Tibial artery (tissue), 4 donors: ENCODE measurements at regions of chr17 and their contacts with region 1.

Region 1: GRCh38 chr17:75632863-75633485 is at the start of gene SMIM5:
- DNase-seq: peak; percentile 93 to 94
- H3K4me3 ChIP-seq: peak within 1 kb of the TSS in 1 of 2 donors; percentile 17
- H3K27ac ChIP-seq: peak within 1 kb of the TSS; percentile 72 to 76
- H3K4me1 ChIP-seq: peaks cover 10 to 27% (median 20%) of the 10 kb centered on the region in 4 donors
- H3K27me3 ChIP-seq: no peaks in the 10 kb centered on the region
- CTCF ChIP-seq: peak; percentile 93 to 97

Region 2: GRCh38 chr17:75667021-75667790 is 34.2 kb after region 1 on chr17 and contains the starts of genes RECQL5 and SAP30BP:
- intact Hi-C with region 1: loop called (anchors 5 kb)
- DNase-seq: peak; percentile 98
- H3K4me3 ChIP-seq: peak within 1 kb of the TSS; percentile 88 to 96
- H3K27ac ChIP-seq: peak within 1 kb of the TSS; percentile 90 to 91
- H3K4me1 ChIP-seq: peaks cover 0 to 38% (median 19%) of the 10 kb centered on the region in 4 donors
- H3K27me3 ChIP-seq: no peaks in the 10 kb centered on the region
- CTCF ChIP-seq: peak in 1 of 2 experiments; percentile 7

Region 3: DNA sequence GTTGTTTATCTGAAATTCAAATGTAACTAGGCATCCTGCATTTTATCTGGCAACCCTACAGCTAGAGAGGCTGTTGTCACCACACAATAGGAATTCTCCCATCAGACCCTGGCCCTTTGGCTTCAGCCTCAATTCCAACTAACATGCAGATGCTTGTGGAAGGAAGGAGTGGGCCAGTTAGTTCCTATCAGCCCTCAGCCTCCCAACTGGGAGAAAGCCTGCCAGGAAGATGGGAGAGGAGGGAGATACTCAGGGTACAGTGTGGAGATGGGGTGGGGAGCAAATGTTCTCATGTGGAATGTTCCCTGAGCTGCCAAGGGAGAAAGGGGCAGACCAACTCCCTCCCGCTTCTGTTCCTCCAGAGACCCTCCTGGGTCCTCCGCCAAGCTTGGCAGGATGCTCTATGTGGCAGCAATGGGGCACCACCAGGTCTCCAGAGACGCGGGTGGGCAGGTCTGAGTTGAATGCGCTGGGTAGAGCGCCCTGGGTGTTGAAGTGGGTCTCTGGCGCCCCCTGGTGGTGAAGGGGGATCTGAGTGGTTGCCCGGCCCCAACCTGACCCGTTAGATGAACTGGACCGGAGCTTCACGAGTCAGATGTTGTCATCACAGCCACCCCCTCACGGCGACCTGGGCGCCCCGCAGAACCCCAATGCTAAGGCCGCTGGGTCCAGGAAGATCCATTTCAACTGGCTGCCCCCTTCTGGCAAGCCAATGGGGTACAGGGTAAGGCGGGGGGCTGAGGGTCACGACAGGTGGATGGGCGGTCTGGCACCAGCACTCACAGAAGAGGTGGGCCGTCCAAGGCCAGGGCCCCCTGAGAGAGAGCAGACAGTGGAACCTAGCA is 116.8 kb after region 1 on chr17:
- intact Hi-C with region 1: loop called (anchors 2 kb)
- DNase-seq: peak; percentile 87 to 91
- H3K4me3 ChIP-seq: peak overlapping the region in 1 of 2 donors; percentile 27
- H3K27ac ChIP-seq: peak overlapping the region; percentile 21 to 51
- H3K4me1 ChIP-seq: peaks cover 0 to 31% (median 22%) of the 10 kb centered on the region in 4 donors
- H3K27me3 ChIP-seq: no peaks in the 10 kb centered on the region
- CTCF ChIP-seq: peak; percentile 91 to 92